ENCODE measurements at regions of chr17 and their contacts with region 1.

Region 1: GRCh38 chr17:10697092-10698081 is at the starts of genes ADPRM and SCO1:
- DNase-seq: peak; percentile 79 to 97
- H3K4me3 ChIP-seq: peak within 1 kb of the TSS; percentile 99 to 100
- H3K27ac ChIP-seq: peak within 1 kb of the TSS; percentile 94 to 97
- H3K4me1 ChIP-seq: peaks cover 5 to 18% of the 10 kb centered on the region in 2 donors
- H3K27me3 ChIP-seq: no peaks in the 10 kb centered on the region
- CTCF ChIP-seq: peak in 2 of 3 experiments; percentile 35 to 46
- total RNA-seq, gene ADPRM: not detected
- total RNA-seq, gene SCO1: 173 TPM

Region 2: GRCh38 chr17:10683853-10684252 is 13.5 kb before region 1 on chr17:
- intact Hi-C with region 1: loop called (anchors 2 kb)
- DNase-seq: no peak
- H3K4me3 ChIP-seq: no peak overlapping the region
- H3K27ac ChIP-seq: peak overlapping the region in 1 of 2 donors; percentile 19
- H3K4me1 ChIP-seq: peaks cover 8 to 10% of the 10 kb centered on the region in 2 donors
- H3K27me3 ChIP-seq: no peaks in the 10 kb centered on the region
- CTCF ChIP-seq: peak in 2 of 3 experiments; percentile 31 to 37

Region 3: DNA sequence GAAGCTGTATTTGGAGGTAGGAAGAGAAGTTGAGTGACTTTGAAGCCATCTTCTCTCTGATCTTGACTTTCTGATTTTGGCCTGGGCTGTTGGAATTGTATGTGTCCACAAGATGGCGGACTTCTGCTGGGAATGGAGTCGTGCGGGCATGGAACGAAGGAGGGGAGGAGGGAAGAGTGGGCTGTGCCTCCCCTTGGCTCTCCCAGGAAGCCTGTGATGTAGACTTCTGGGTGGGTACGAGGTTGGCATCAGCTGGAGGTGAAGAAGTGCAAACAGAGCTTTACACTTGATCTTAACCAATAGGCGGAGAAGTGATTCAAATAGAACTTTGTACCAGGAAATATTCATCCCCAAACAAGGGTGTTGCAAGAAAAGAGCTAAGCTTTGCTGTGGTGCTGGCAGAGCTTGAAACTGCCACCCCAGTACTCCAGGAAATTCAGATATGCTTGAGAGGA is 39.8 kb after region 1 on chr17:
- intact Hi-C with region 1: no loop called
- DNase-seq: peak in 1 of 2 donors; percentile 82
- H3K4me3 ChIP-seq: no peak overlapping the region
- H3K27ac ChIP-seq: no peak overlapping the region
- H3K4me1 ChIP-seq: no peaks in the 10 kb centered on the region
- H3K27me3 ChIP-seq: no peaks in the 10 kb centered on the region
- CTCF ChIP-seq: peak; percentile 46 to 82 (median 77)